Calu3 (cell line): ENCODE measurements at regions of chr4 and their contacts with region 1.

Region 1: DNA sequence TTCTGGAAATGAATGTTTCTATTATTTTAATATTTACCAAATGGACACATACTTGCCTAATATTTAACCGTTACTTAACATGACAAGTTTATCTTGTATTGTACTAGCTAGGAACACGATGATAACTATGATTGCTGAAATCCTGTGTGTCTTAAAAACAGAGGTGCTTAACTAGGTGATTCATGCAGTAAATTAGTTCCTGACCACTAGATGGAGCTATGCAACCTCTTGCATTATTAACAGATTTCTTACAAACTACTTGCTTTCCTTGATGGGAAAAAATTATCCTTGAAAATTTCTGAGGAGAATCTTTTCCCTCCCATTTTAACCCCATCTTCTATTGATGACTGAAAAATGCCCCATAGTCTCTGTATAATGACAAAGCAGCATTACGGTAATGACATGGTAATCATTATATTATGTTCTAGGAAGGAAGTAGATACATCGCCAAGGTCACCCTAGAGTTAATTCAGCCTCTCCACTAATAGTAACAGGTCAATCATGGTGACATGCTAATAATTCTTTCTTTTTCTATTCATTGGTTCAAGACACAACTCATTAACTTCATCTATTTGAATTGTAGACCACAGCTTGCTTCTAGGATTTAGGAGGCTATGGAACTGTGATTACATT is 844.2 kb downstream of the RAPGEF2 start:
- DNase-seq: no peak
- H3K4me3 Mint-ChIP-seq: no peak overlapping the region
- H3K27ac Mint-ChIP-seq: no peak overlapping the region
- H3K4me1 Mint-ChIP-seq: no peaks in the 10 kb centered on the region
- H3K27me3 Mint-ChIP-seq: no peaks in the 10 kb centered on the region
- CTCF ChIP-seq: peak; percentile 23

Region 2: DNA sequence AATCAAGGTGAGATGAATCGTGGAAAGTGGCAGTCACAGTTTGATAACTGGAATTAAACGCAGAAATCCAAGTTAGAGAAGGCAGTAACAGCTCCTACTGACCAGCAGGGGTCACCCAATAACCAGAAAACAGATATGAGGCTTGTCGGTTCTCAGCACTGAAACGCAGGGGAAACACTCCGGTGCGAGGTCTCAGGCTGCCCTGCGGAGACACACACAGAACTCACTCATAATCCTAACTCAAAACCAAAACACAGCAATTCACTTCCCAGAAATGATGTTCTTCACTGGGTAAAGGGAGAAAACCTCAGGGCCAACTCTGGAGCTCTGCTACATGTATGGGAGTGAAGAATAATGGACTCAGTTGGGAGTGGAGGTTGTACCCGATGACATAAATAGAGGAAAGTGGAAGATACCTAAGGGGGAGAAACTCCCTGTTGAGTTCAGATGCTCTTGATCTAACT is 459.8 kb before region 1 on chr4:
- CTCF ChIA-PET with region 1: no interaction called
- intact Hi-C with region 1: loop called (anchors 5 kb)
- DNase-seq: peak; percentile 59
- H3K4me3 Mint-ChIP-seq: peak overlapping the region; percentile 34
- H3K27ac Mint-ChIP-seq: no peak overlapping the region
- H3K4me1 Mint-ChIP-seq: no peaks in the 10 kb centered on the region
- H3K27me3 Mint-ChIP-seq: no peaks in the 10 kb centered on the region
- CTCF ChIP-seq: peak; percentile 52

Region 3: DNA sequence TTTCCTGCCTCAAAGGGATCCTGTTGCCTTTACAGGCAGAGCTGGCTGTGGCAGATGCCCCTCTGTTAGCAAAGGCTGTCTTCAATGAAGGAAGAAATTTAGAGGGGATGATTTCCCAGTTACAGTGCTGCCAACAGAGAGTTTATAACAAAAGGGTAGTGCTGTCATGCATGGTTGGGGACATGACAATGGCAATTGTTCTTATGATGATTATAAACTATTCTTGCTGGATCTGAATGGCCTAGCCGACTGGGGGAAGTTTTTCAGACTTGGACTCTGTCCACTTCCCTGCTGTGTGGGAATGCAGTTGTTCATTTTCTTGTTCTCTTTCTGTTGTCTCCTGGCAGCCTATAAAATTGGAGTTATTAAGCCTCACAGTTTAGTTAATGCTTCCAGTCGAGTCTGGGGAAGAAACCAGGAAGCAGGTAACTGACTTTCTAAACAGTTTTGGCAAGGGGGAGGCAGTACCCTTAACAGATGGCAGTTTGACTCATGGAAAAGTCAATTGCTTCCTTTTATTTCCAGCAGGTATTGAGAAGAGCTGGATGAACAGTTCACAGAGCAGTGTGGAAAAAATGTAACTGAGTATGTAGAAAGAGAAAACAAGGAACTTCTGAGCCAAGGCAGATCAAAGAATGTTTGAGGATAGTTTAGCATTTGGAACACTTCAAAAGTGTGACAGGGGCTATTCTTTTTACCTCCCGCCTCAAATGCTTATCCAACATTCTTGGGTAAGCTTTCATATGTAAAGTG is 261.6 kb before region 1 on chr4:
- CTCF ChIA-PET with region 1: no interaction called
- intact Hi-C with region 1: no loop called
- DNase-seq: no peak
- H3K4me3 Mint-ChIP-seq: no peak overlapping the region
- H3K27ac Mint-ChIP-seq: no peak overlapping the region
- H3K4me1 Mint-ChIP-seq: peaks cover 11% of the 10 kb centered on the region
- H3K27me3 Mint-ChIP-seq: no peaks in the 10 kb centered on the region
- CTCF ChIP-seq: no peak

Region 4: DNA sequence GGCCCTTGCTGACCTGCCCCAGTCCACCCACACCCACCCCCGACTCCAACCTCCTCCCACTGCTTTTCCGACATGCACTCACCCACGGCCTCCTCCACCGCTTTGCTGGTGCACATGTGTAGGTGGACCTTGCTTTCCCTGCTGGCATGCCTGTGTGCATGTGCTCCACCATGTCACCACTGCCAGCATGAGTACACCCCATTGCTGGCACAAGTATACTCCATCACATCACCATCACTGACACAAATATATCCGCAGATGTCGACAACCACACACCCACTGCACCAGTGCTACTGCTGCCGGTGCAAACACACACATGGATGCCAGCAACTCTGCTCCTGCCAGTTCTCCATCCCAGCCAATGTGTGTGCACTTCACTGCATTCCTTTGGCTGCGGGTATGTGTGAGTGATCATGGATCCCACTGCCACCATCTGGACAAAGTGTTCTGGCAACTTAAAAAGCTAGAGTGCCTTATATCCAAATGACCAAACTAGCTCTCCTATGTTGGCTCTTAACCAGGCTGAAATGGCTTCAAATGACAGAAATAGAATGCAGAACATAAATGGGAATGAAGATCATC is 228.1 kb after region 1 on chr4:
- CTCF ChIA-PET with region 1: no interaction called
- intact Hi-C with region 1: loop called (anchors 1 kb)
- DNase-seq: no peak
- H3K4me3 Mint-ChIP-seq: no peak overlapping the region
- H3K27ac Mint-ChIP-seq: no peak overlapping the region
- H3K4me1 Mint-ChIP-seq: peaks cover 6% of the 10 kb centered on the region
- H3K27me3 Mint-ChIP-seq: no peaks in the 10 kb centered on the region
- CTCF ChIP-seq: no peak

Region 5: GRCh38 chr4:160364217-160364616 is 417.1 kb after region 1 on chr4:
- CTCF ChIA-PET with region 1: no interaction called
- intact Hi-C with region 1: loop called (anchors 10 kb)
- DNase-seq: no peak
- H3K4me3 Mint-ChIP-seq: no peak overlapping the region
- H3K27ac Mint-ChIP-seq: no peak overlapping the region
- H3K4me1 Mint-ChIP-seq: peaks cover 11% of the 10 kb centered on the region
- H3K27me3 Mint-ChIP-seq: no peaks in the 10 kb centered on the region
- CTCF ChIP-seq: no peak